ENCODE measurements at regions of chr6 and their contacts with region 1.

Region 1: GRCh38 chr6:12392490-12392889 is 102.3 kb downstream of the EDN1 start:
- DNase-seq: no peak
- H3K4me3 ChIP-seq: no peak overlapping the region
- H3K27ac ChIP-seq: no peak overlapping the region
- H3K4me1 ChIP-seq: no peaks in the 10 kb centered on the region
- H3K27me3 ChIP-seq: no peaks in the 10 kb centered on the region
- CTCF ChIP-seq: no peak
- POLR2A ChIP-seq: no peak

Region 2: GRCh38 chr6:11989386-11989785 is 403.1 kb before region 1 on chr6:
- intact Hi-C with region 1: no loop called
- DNase-seq: no peak
- H3K4me3 ChIP-seq: no peak overlapping the region
- H3K27ac ChIP-seq: no peak overlapping the region
- H3K4me1 ChIP-seq: no peaks in the 10 kb centered on the region
- H3K27me3 ChIP-seq: no peaks in the 10 kb centered on the region
- CTCF ChIP-seq: no peak
- POLR2A ChIP-seq: no peak

Region 3: DNA sequence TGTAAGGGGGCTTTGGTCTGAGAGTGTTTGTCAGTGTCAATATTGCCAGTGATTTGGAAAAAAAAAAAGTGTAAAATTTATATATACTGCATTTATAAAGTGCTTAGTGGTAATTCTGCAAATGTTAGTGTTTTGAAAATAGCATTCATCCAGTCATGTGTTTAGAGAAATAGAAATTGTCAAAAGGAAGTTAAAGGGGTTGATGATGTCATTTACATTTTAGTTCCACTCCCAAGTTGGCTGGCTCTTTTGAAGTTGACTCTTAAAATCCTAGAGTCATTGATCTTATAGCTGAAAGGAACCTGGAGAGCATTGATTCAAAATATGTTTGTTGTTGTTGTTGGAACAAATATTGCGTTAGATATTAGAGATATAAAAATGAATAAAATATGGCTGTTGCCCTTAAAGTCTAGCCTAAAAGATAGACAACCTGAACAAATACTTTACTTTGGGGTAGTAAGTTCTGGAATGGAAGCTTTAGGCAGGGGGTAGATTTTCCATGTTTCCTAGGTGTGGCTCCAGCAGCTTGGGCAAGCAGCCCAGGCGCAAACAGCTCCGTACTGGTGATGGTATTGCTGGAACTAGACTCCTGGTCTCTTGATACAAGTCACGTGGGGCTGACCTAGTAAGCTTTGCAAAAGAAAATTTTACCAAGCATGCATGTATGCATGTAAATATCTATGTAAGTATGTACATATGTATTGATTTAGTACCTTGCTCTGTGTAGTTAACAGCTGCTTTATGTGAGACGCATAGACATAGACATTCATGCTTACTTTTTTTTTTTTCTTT is 334.1 kb before region 1 on chr6:
- intact Hi-C with region 1: loop called (anchors 5 kb)
- DNase-seq: no peak
- H3K4me3 ChIP-seq: no peak overlapping the region
- H3K27ac ChIP-seq: no peak overlapping the region
- H3K4me1 ChIP-seq: no peaks in the 10 kb centered on the region
- H3K27me3 ChIP-seq: no peaks in the 10 kb centered on the region
- CTCF ChIP-seq: no peak
- POLR2A ChIP-seq: no peak

Region 4: GRCh38 chr6:12516070-12516469 is 123.6 kb after region 1 on chr6:
- intact Hi-C with region 1: no loop called
- DNase-seq: no peak
- H3K4me3 ChIP-seq: no peak overlapping the region
- H3K27ac ChIP-seq: no peak overlapping the region
- H3K4me1 ChIP-seq: no peaks in the 10 kb centered on the region
- H3K27me3 ChIP-seq: no peaks in the 10 kb centered on the region
- CTCF ChIP-seq: no peak
- POLR2A ChIP-seq: no peak

Measured in breast epithelium (tissue), 4 donors.